ENCODE measurements at regions of chr11 and their contacts with region 1.

Region 1: GRCh38 chr11:73141848-73142286 is 251 bp downstream of the FCHSD2 start:
- DNase-seq: peak; percentile 66
- H3K4me3 Mint-ChIP-seq: peak overlapping the region; percentile 97
- H3K27ac Mint-ChIP-seq: peak overlapping the region; percentile 86
- H3K4me1 Mint-ChIP-seq: peaks cover 46% of the 10 kb centered on the region
- H3K27me3 Mint-ChIP-seq: no peaks in the 10 kb centered on the region

Region 2: GRCh38 chr11:72924568-72925190 is 217.2 kb before region 1 on chr11:
- CTCF ChIA-PET with region 1: interaction called, 12 read pairs
- POLR2A ChIA-PET with region 1: interaction called, 6 read pairs
- DNase-seq: no peak
- H3K4me3 Mint-ChIP-seq: no peak overlapping the region
- H3K27ac Mint-ChIP-seq: no peak overlapping the region
- H3K4me1 Mint-ChIP-seq: peaks cover 4% of the 10 kb centered on the region
- H3K27me3 Mint-ChIP-seq: no peaks in the 10 kb centered on the region

Region 3: DNA sequence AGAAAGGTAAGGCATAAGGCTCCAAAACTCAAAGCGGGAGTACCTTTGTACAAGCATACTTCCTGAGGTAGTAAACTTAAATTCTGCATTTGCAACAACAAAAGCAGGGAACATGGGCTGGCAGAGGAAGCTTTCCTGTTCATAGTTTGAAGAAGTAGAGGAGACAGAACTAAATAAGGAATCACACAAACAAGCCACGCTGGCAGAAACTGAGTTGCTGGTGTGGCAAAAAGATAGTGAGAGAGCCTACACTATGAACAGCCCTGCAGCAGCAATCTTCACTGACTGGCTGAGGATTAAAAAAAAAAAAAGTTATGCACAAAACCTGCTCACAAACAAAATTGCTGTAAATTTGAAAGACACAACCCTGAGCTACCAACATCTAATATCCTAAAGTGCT is 46.3 kb before region 1 on chr11:
- CTCF ChIA-PET with region 1: no interaction called
- POLR2A ChIA-PET with region 1: no interaction called
- DNase-seq: no peak
- H3K4me3 Mint-ChIP-seq: no peak overlapping the region
- H3K27ac Mint-ChIP-seq: no peak overlapping the region
- H3K4me1 Mint-ChIP-seq: peaks cover 3% of the 10 kb centered on the region
- H3K27me3 Mint-ChIP-seq: no peaks in the 10 kb centered on the region

Region 4: DNA sequence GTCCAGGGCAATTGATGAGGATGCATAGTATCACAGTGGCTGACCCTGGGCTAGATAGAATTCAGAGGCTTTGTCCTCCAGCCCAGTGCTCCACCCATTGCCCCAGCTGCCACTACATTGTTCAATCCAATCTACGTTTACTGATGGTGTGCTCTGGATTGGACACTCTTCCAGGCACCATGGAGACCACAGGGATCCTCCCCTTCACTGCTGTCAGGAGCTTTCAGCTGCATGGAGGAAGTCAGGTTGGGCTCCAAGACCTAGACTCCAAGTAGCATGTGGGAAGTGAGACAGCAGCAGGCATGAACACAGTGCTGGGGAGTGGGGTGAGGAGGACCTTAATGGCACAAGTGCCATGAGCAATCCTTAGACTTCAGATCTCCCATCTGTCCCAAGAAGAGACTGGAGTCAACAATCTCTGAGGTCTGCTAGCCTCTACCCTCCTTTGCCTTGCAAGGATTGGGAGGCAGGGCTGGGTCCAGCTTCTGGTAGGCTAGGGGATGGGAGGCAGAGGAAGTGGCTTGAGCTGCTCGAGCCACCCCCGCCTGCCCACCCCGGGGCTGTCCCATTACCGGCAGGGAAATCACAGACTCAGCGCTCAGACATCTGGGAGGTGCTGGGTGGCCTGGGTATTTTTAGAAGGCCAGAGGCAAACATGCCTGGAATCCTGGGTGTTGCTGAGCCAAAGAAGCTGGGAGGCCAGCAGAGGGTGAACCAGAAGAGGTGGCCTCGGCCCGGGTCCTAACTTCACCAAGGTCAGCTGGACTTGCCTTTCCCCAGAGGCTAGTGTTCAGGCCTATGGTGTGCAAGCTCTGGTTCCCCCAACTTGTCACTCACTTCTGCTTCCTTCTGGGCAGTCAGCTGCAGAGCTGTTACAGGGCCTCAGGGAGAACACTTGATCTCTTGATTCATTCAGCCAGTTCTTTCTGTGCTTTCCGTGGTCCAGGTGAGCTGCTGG is 15.5 kb after region 1 on chr11:
- CTCF ChIA-PET with region 1: interaction called, 58 read pairs
- POLR2A ChIA-PET with region 1: interaction called, 76 read pairs
- DNase-seq: no peak
- H3K4me3 Mint-ChIP-seq: no peak overlapping the region
- H3K27ac Mint-ChIP-seq: no peak overlapping the region
- H3K4me1 Mint-ChIP-seq: peaks cover 40% of the 10 kb centered on the region
- H3K27me3 Mint-ChIP-seq: peaks cover 4% of the 10 kb centered on the region